ENCODE measurements at regions of chr17 and their contacts with region 1.

Region 1: DNA sequence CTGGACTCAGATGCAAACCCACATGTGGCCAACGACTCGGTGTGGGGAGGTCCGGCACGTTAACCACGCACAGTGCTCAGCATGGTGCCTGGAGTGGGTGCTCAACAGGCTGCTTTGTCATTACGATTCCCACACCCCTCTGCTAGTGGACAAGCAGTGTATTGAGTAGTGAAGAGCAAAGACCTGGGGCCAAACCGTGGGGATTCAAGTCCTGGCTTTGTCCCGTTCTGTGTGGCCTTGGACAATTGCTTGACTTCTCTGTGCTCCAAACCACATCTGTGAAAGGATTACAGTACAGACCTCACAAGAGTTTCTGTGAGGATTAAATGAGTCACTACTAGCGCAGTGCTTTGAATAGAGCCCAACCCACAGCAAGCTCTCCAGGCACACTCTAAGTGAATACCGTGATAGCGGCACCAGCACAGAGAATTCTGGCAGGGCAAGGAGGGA is 33.8 kb downstream of the TRPV2 start:
- DNase-seq: no peak
- H3K4me3 ChIP-seq: no peak overlapping the region
- H3K27ac ChIP-seq: peak overlapping the region; percentile 25
- H3K4me1 ChIP-seq: peaks cover 12% of the 10 kb centered on the region
- H3K27me3 ChIP-seq: no peaks in the 10 kb centered on the region
- CTCF ChIP-seq: no peak

Region 2: DNA sequence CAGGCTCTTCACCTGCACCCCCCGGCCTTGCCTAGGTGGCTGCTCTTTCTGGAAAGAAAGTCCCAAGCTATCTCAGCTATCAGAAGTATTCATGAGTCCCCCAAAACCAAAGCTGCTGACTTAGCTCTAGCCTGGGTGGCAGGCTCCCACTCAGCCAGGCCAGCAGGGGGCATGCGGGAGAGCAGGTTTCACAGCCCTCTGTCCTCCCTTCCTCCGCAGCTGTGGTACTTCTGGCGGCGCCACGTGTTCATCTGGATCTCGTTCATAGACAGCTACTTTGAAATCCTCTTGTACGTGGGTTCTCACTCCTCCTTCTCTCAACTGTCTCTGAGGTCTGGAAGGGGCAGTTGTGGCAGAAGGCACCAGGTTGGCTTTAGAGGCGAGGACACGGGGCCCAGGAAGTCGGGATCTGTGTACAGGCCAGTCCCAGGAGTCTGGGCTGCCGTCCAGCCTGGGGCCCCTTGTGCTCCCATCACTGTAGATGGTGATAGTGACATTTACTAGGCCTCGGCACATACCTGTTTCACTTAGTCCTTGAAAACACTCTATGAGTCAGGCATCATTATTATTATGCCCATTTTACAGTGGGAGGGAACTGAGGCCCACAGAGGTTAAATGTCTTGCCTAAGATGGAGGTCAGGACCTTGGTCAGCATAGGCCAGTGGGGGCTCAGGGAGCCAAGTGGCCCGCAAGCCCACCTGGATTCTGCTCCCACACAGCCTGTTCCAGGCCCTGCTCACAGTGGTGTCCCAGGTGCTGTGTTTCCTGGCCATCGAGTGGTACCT is 20.9 kb before region 1 on chr17:
- CTCF ChIA-PET with region 1: interaction called, 12 read pairs
- POLR2A ChIA-PET with region 1: no interaction called
- intact Hi-C with region 1: no loop called
- DNase-seq: peak; percentile 77
- H3K4me3 ChIP-seq: no peak overlapping the region
- H3K27ac ChIP-seq: no peak overlapping the region
- H3K4me1 ChIP-seq: no peaks in the 10 kb centered on the region
- H3K27me3 ChIP-seq: no peaks in the 10 kb centered on the region
- CTCF ChIP-seq: peak; percentile 70